ENCODE measurements at regions of chr20 and their contacts with region 1.

Region 1: GRCh38 chr20:64255361-64256281 is at the start of gene PCMTD2:
- DNase-seq: peak; percentile 70 to 93
- H3K4me3 ChIP-seq: peak within 1 kb of the TSS; percentile 77
- H3K27ac ChIP-seq: 0 out of 2 replicates have a peak within 1 kb of the TSS, but pooled peaks have one; percentile 3
- H3K4me1 ChIP-seq: peaks cover 15% of the 10 kb centered on the region
- H3K27me3 ChIP-seq: peaks cover 23% of the 10 kb centered on the region
- CTCF ChIP-seq: 0 out of 2 replicates have a peak, but pooled peaks have one; percentile 21
- total RNA-seq, gene PCMTD2: 80.1 and 86.5 TPM in 2 replicates

Region 2: GRCh38 chr20:64168381-64169090 is 87.1 kb before region 1 on chr20:
- CTCF ChIA-PET with region 1: no interaction called
- POLR2A ChIA-PET with region 1: no interaction called
- intact Hi-C with region 1: no loop called
- DNase-seq: no peak
- H3K4me3 ChIP-seq: no peak overlapping the region
- H3K27ac ChIP-seq: no peak overlapping the region
- H3K4me1 ChIP-seq: no peaks in the 10 kb centered on the region
- H3K27me3 ChIP-seq: peaks cover 97% of the 10 kb centered on the region
- CTCF ChIP-seq: no peak

Region 3: DNA sequence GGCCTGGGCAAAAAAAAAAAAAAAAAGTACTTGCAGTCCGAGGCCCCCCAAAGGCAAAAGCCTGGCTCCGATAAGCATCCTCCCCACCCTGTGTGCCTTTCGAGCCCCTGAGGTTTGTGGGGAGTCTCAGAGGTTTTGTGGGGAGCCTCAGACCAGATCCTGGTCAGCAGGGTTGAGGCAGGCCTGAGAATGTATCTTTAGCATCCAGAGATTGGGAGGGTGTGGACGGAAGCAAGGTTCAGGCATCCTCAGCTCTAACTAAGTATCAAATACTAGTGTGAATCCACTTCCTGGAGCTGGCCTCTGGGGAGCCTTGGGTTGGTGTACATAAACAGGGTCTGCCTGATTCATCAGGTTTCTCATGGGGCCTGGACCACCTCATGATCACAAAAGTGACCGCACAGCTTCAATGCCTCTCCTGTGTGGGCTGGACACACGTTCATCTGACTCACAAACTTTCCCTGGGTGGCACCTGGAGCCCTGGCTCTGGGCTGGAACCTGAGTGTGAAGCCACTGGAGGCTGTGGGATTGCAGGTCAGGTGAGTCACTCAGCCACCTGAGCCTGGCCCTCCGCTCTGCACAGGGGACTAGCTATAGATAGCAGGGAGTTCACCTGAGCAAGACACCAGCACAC is 24.3 kb after region 1 on chr20:
- CTCF ChIA-PET with region 1: no interaction called
- POLR2A ChIA-PET with region 1: interaction called, 11 read pairs
- intact Hi-C with region 1: no loop called
- DNase-seq: peak; percentile 12 to 53
- H3K4me3 ChIP-seq: no peak overlapping the region
- H3K27ac ChIP-seq: no peak overlapping the region
- H3K4me1 ChIP-seq: no peaks in the 10 kb centered on the region
- H3K27me3 ChIP-seq: peaks cover 25% of the 10 kb centered on the region
- CTCF ChIP-seq: no peak